Activated T-helper 2 cell treated with anti-CD3 and anti-CD28 coated beads, Interferon-gamma antibody, Interleukin-2, Interleukin-4, amounts not matched to agents 10 μg/mL and 5 μg/mL and 100 μg/mL, durations not matched to agents 14 hours and 24 hours and 36 hours (primary cell): ENCODE measurements at regions of chr15 and their contacts with region 1.

Region 1: GRCh38 chr15:85543741-85544155 is 163.3 kb downstream of the AKAP13 start:
- DNase-seq: peak; percentile 31
- H3K4me3 Mint-ChIP-seq: peak overlapping the region; percentile 55
- H3K27ac Mint-ChIP-seq: peak overlapping the region; percentile 69
- H3K4me1 Mint-ChIP-seq: peaks cover 77% of the 10 kb centered on the region
- H3K27me3 Mint-ChIP-seq: no peaks in the 10 kb centered on the region

Region 2: GRCh38 chr15:85318048-85318731 is 225.6 kb before region 1 on chr15:
- intact Hi-C with region 1: loop called (anchors 5 kb)
- DNase-seq: peak; percentile 55
- H3K4me3 Mint-ChIP-seq: peak overlapping the region; percentile 41
- H3K27ac Mint-ChIP-seq: peak overlapping the region; percentile 91
- H3K4me1 Mint-ChIP-seq: peaks cover 66% of the 10 kb centered on the region
- H3K27me3 Mint-ChIP-seq: no peaks in the 10 kb centered on the region

Region 3: GRCh38 chr15:85504749-85505676 is 38.7 kb before region 1 on chr15:
- intact Hi-C with region 1: loop called (anchors 2 kb)
- DNase-seq: no peak
- H3K4me3 Mint-ChIP-seq: no peak overlapping the region
- H3K27ac Mint-ChIP-seq: peak overlapping the region; percentile 54
- H3K4me1 Mint-ChIP-seq: peaks cover 54% of the 10 kb centered on the region
- H3K27me3 Mint-ChIP-seq: no peaks in the 10 kb centered on the region

Region 4: DNA sequence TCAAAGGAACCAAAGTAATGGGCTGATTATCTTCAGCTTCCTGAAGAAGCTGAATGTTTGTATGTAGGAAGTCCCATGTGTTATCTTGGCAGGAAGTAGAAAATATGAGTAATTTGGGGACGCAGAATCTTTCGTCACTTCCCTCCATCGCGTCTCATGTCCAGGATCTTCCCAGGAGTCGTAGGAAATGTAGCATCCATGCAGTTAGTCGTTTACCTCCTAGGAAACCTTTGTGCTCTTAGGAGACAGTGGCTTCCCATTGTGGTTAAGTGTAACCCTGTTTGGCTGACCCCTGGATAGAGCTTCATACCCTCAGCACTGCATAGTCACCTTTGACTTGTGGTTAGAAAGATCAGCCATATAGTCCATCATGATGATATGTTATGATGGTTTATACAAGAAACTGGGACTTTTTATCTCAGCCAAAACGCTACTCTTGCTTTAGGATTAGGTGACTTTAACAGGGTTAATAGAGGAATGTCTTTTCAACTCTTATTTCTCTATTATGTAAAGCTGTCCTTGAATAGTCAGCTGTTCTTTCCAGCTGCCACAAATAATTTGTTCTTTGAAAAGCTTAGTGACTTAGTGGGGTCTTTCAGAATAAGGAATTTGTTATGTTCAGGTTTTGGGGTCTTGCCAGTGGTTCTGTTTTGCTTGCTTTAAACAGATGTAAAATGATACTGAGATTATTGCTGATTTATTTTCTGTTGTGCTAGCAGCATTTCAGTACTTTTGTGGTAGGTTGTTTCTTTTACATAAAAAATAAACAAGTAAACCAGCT is 158.8 kb after region 1 on chr15:
- intact Hi-C with region 1: loop called (anchors 5 kb)
- DNase-seq: peak; percentile 39
- H3K4me3 Mint-ChIP-seq: peak overlapping the region; percentile 77
- H3K27ac Mint-ChIP-seq: peak overlapping the region; percentile 99
- H3K4me1 Mint-ChIP-seq: peaks cover 51% of the 10 kb centered on the region
- H3K27me3 Mint-ChIP-seq: no peaks in the 10 kb centered on the region

Region 5: GRCh38 chr15:85854345-85855097 is 310.8 kb after region 1 on chr15:
- intact Hi-C with region 1: no loop called
- DNase-seq: peak; percentile 32
- H3K4me3 Mint-ChIP-seq: no peak overlapping the region
- H3K27ac Mint-ChIP-seq: no peak overlapping the region
- H3K4me1 Mint-ChIP-seq: peaks cover 6% of the 10 kb centered on the region
- H3K27me3 Mint-ChIP-seq: peaks cover 33% of the 10 kb centered on the region